CD4-positive, alpha-beta memory T cell (primary cell): ENCODE measurements at regions of chr11 and their contacts with region 1.

Region 1: DNA sequence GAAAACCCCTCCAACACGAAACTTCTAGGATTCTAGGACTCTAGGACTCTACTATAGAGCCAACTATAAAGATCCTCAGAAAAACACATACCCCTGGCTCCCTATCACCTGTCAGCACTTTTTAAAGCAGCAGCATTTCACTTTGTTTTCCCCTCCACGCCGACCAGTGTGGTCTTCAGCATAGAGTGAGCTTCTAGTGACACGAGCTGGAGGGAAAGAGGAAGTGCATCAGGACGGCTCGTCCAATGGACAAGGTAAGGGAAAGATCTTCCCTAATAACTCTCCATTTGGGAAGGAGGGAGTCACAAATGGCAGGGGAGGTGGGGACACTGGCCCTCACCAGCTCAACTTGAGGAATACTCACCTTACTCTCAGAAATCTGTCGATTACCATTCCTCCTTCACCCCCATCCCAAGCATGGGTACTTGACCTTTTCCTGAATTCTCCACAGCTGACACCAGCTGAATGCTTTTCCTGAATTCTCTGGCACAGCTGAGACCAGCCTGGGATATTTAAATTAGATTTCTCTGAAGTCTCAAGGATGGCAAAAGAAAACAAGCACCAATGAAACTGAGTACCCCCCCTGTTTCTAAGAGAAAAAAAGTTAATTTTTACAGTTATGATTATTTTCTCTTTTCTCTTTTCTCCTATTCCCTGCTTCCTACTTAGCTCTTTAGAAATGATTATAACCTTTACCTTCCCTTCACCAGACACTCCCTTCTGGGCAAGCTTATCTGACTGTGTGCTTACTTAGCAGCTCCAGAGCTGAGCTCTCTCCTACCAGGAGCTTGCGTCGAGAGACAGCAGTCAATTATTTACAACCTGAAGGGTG is 33.3 kb upstream of the NNMT start:
- DNase-seq: peak in 4 of 5 donors; percentile 17 to 28 (median 21)
- H3K4me3 ChIP-seq: no peak overlapping the region
- H3K4me3 Mint-ChIP-seq: no peak overlapping the region
- H3K27ac ChIP-seq: no peak overlapping the region
- H3K27ac Mint-ChIP-seq: no peak overlapping the region
- H3K4me1 ChIP-seq: no peaks in the 10 kb centered on the region
- H3K4me1 Mint-ChIP-seq: peaks cover 0 to 3% (median 0%) of the 10 kb centered on the region in 4 donors
- H3K27me3 ChIP-seq: peaks cover 3% of the 10 kb centered on the region
- H3K27me3 Mint-ChIP-seq: peaks cover 0 to 6% of the 10 kb centered on the region in 2 donors

Region 2: GRCh38 chr11:113532697-113533424 is 730.0 kb before region 1 on chr11:
- CTCF ChIA-PET with region 1: no interaction called
- POLR2A ChIA-PET with region 1: no interaction called
- intact Hi-C with region 1: loop called (anchors 5 kb)
- DNase-seq: peak; percentile 19 to 42 (median 34)
- H3K4me3 ChIP-seq: no peak overlapping the region
- H3K4me3 Mint-ChIP-seq: peak overlapping the region in 1 of 8 donors; percentile 32
- H3K27ac ChIP-seq: no peak overlapping the region
- H3K27ac Mint-ChIP-seq: no peak overlapping the region
- H3K4me1 ChIP-seq: no peaks in the 10 kb centered on the region
- H3K4me1 Mint-ChIP-seq: peaks cover 0 to 2% (median 0%) of the 10 kb centered on the region in 4 donors
- H3K27me3 ChIP-seq: no peaks in the 10 kb centered on the region
- H3K27me3 Mint-ChIP-seq: peaks cover 6 to 18% of the 10 kb centered on the region in 2 donors

Region 3: DNA sequence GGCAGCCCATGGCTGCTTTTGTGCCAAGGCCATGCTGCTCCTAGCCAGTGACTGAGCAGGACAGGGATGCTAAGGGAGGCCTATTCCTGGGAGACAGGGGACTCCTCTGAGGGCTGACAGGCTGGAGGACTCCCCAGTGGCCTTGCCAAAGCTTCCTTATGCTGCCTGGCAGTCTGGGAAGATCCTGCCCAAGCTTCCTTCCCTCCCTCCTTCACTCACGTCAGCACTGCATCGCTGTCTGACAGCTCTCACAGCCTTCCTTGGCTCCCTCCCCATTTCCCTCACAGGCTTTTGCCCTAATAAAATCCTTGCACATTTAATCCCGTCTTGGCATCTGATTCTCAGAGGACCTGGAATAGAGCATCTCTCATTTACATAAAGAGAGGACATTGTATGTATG is 261.5 kb before region 1 on chr11:
- CTCF ChIA-PET with region 1: interaction called, 320 read pairs
- POLR2A ChIA-PET with region 1: no interaction called
- intact Hi-C with region 1: no loop called
- DNase-seq: no peak
- H3K4me3 ChIP-seq: no peak overlapping the region
- H3K4me3 Mint-ChIP-seq: no peak overlapping the region
- H3K27ac ChIP-seq: no peak overlapping the region
- H3K27ac Mint-ChIP-seq: peak overlapping the region in 1 of 7 donors; percentile 26
- H3K4me1 ChIP-seq: no peaks in the 10 kb centered on the region
- H3K4me1 Mint-ChIP-seq: no peaks in the 10 kb centered on the region
- H3K27me3 ChIP-seq: no peaks in the 10 kb centered on the region
- H3K27me3 Mint-ChIP-seq: peaks cover 6 to 14% of the 10 kb centered on the region in 2 donors

Region 4: DNA sequence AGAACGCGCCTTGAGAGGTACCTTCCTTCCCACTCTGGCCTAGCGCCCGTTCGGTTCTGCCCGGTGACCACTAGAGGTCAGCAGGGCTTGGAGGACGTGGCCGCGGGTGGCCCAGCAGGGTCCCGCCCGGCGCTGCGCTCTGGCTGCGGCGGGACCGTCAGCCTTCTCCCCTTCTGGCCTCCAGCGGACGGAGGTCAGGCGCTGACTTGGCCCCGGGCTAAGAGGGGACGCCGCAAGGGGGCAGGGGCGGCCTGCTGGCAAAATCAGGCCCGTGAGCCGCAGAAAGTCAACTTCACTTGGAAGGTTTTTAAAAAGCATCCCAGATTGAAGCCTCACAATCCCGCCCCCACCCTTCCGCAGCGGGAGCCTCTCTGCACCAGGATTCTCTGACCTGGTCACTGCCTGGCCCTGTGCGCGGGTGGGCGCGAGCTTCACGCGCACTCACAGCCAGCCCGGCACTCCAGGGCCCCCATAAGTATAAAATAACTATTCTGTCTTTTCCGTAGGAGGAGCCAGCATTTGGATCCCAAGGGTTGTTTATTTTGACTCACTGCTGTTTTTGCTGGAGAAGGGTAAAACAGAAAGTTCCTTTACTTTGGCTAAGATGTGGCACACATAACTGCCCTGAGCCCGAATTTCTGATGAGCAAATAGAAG is 226.6 kb before region 1 on chr11:
- CTCF ChIA-PET with region 1: interaction called, 255 read pairs
- POLR2A ChIA-PET with region 1: interaction called, 3 read pairs
- intact Hi-C with region 1: loop called (anchors 1 kb)
- DNase-seq: peak in 4 of 5 donors; percentile 51 to 54 (median 52)
- H3K4me3 ChIP-seq: no peak overlapping the region
- H3K4me3 Mint-ChIP-seq: peak overlapping the region in 5 of 8 donors; percentile 7 to 54 (median 28)
- H3K27ac ChIP-seq: no peak overlapping the region
- H3K27ac Mint-ChIP-seq: no peak overlapping the region
- H3K4me1 ChIP-seq: peaks cover 6% of the 10 kb centered on the region
- H3K4me1 Mint-ChIP-seq: peaks cover 0 to 9% (median 6%) of the 10 kb centered on the region in 4 donors
- H3K27me3 ChIP-seq: no peaks in the 10 kb centered on the region
- H3K27me3 Mint-ChIP-seq: no peaks in the 10 kb centered on the region

Region 5: DNA sequence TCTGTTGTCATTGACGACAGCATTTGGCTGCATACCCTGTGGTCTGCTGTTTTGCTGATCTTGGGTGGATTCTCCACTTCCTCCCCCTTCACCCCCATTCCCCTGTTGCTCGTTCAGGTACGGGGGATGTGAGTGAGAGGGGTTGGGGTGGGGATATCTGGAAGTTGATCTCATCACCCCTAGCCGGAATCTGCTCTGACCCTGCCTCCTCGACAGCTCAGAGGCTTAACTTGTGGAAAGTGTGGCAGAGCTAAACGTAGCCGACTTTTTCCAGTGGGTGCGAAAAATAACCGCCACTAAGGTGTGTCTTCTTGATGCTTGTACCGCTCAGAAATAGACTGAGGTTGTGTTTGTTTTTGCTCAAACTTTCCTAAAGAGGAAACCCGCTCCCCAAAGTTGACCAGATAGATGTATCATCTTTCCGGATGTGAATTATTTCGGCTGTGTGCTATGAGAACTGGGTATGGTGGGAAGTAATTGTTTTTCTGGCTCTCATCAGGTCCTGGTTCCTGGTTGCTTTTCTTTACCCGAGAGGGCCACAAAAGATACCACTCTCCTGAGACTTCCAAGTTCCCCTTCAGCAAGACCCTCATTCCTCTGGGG is 196.8 kb before region 1 on chr11:
- CTCF ChIA-PET with region 1: interaction called, 66 read pairs
- POLR2A ChIA-PET with region 1: no interaction called
- intact Hi-C with region 1: no loop called
- DNase-seq: peak in 4 of 5 donors; percentile 51 to 69 (median 62)
- H3K4me3 ChIP-seq: no peak overlapping the region
- H3K4me3 Mint-ChIP-seq: peak overlapping the region in 7 of 8 donors; percentile 24 to 62 (median 45)
- H3K27ac ChIP-seq: peak overlapping the region; percentile 0
- H3K27ac Mint-ChIP-seq: peak overlapping the region; percentile 54 to 91 (median 78)
- H3K4me1 ChIP-seq: peaks cover 6% of the 10 kb centered on the region
- H3K4me1 Mint-ChIP-seq: peaks cover 5 to 51% (median 24%) of the 10 kb centered on the region in 4 donors
- H3K27me3 ChIP-seq: peaks cover 4% of the 10 kb centered on the region
- H3K27me3 Mint-ChIP-seq: no peaks in the 10 kb centered on the region

Region 6: GRCh38 chr11:114192841-114193389 is 70.0 kb before region 1 on chr11:
- CTCF ChIA-PET with region 1: interaction called, 14 read pairs
- POLR2A ChIA-PET with region 1: no interaction called
- intact Hi-C with region 1: no loop called
- DNase-seq: no peak
- H3K4me3 ChIP-seq: no peak overlapping the region
- H3K4me3 Mint-ChIP-seq: no peak overlapping the region
- H3K27ac ChIP-seq: no peak overlapping the region
- H3K27ac Mint-ChIP-seq: peak overlapping the region in 3 of 7 donors; percentile 34 to 94 (median 36)
- H3K4me1 ChIP-seq: peaks cover 8% of the 10 kb centered on the region
- H3K4me1 Mint-ChIP-seq: peaks cover 17 to 33% (median 21%) of the 10 kb centered on the region in 4 donors
- H3K27me3 ChIP-seq: no peaks in the 10 kb centered on the region
- H3K27me3 Mint-ChIP-seq: no peaks in the 10 kb centered on the region

Region 7: DNA sequence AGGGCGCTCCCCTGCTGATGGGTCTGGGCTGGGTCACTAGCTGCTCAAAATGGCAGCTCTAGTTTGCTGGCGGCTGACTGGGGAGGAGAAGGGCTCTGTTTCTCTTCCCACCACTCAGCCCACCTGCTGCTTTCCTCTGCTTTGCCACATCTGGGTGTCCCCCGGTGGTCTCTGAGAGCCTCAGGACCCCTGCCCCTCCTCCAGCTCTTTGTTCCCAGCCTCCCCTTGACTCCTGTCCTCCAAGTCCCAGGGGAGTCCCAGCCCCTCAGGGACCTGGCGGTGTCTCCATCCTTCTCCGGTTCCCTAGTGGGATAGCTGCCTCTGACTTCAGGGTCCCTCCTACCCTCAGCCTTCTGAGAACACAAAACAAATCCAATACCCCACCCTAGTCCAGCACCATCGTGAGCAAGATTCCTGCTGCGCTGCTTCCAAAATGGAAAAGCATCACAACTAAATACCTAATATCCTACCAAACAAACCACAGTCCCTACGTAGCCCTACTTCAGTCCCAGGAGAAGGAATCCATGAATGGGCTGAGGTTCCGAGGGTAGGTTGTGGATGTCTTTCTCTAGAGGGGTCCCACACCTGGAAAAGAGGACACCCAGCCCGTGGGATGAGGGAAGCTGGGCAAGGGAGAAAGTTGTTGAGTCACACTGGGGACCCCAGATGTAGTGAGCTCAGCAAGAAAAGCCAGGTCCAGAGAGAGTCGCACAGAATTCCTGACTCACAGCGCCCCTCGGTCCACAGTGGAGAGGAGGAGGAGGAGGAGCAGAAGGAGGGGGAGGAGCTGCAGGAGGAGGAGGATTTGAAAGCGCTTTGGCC is 11.7 kb before region 1 on chr11:
- CTCF ChIA-PET with region 1: interaction called, 72 read pairs
- POLR2A ChIA-PET with region 1: no interaction called
- intact Hi-C with region 1: no loop called
- DNase-seq: peak in 1 of 5 donors; percentile 24
- H3K4me3 ChIP-seq: no peak overlapping the region
- H3K4me3 Mint-ChIP-seq: no peak overlapping the region
- H3K27ac ChIP-seq: no peak overlapping the region
- H3K27ac Mint-ChIP-seq: peak overlapping the region in 2 of 7 donors; percentile 18 to 44
- H3K4me1 ChIP-seq: no peaks in the 10 kb centered on the region
- H3K4me1 Mint-ChIP-seq: no peaks in the 10 kb centered on the region
- H3K27me3 ChIP-seq: no peaks in the 10 kb centered on the region
- H3K27me3 Mint-ChIP-seq: peaks cover 0 to 3% of the 10 kb centered on the region in 2 donors

Region 8: GRCh38 chr11:114330373-114330772 is 67.5 kb after region 1 on chr11:
- CTCF ChIA-PET with region 1: no interaction called
- POLR2A ChIA-PET with region 1: no interaction called
- intact Hi-C with region 1: no loop called
- DNase-seq: no peak
- H3K4me3 ChIP-seq: no peak overlapping the region
- H3K4me3 Mint-ChIP-seq: no peak overlapping the region
- H3K27ac ChIP-seq: no peak overlapping the region
- H3K27ac Mint-ChIP-seq: no peak overlapping the region
- H3K4me1 ChIP-seq: no peaks in the 10 kb centered on the region
- H3K4me1 Mint-ChIP-seq: no peaks in the 10 kb centered on the region
- H3K27me3 ChIP-seq: no peaks in the 10 kb centered on the region
- H3K27me3 Mint-ChIP-seq: peaks cover 18 to 20% of the 10 kb centered on the region in 2 donors

Region 9: GRCh38 chr11:114598461-114598860 is 335.6 kb after region 1 on chr11:
- CTCF ChIA-PET with region 1: no interaction called
- POLR2A ChIA-PET with region 1: no interaction called
- intact Hi-C with region 1: no loop called
- DNase-seq: no peak
- H3K4me3 ChIP-seq: no peak overlapping the region
- H3K4me3 Mint-ChIP-seq: no peak overlapping the region
- H3K27ac ChIP-seq: no peak overlapping the region
- H3K27ac Mint-ChIP-seq: no peak overlapping the region
- H3K4me1 ChIP-seq: no peaks in the 10 kb centered on the region
- H3K4me1 Mint-ChIP-seq: no peaks in the 10 kb centered on the region
- H3K27me3 ChIP-seq: no peaks in the 10 kb centered on the region
- H3K27me3 Mint-ChIP-seq: no peaks in the 10 kb centered on the region